ENCODE measurements at regions of chr12 and their contacts with region 1.

Region 1: GRCh38 chr12:3073438-3074250 is 3.5 kb upstream of the TSPAN9 start:
- DNase-seq: peak; percentile 80 to 91 (median 90)
- H3K4me3 ChIP-seq: no peak overlapping the region
- H3K27ac ChIP-seq: no peak overlapping the region
- H3K4me1 ChIP-seq: peaks cover 14% of the 10 kb centered on the region
- H3K27me3 ChIP-seq: no peaks in the 10 kb centered on the region
- CTCF ChIP-seq: peak; percentile 85 to 91 (median 88)
- EP300 ChIP-seq: no peak
- POLR2A ChIP-seq: no peak

Region 2: DNA sequence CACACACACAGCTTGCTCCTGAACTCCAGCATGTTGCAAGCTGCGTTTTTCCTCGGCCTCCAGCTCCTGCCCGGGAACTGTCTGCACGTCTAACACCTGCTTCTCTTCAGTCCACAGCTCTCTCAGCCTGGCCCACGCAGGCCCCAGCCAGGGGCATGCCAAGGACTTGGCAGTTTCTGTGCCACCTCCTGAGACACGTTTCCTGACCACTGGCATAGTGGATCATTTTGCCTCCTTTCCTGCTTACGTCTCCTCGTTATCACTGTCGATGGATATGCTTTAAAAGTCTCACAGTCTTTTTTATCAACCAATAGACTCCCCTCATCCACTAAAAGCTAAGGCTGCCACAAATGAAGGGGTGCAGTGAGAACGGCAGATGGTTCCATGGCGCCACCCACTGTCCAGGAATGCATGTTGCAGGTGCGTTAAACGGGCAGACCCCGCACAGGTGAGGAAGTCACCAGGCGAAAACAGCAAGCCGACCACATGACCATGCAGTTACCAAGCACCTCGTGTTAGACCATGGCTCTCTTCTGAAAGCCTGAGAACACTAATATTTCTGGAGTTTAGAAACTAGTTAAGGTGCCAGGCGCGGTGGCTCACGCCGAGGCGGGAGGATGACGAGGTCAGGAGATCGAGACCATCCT is 129.1 kb before region 1 on chr12:
- intact Hi-C with region 1: no loop called
- DNase-seq: peak; percentile 62 to 79 (median 72)
- H3K4me3 ChIP-seq: no peak overlapping the region
- H3K27ac ChIP-seq: no peak overlapping the region
- H3K4me1 ChIP-seq: no peaks in the 10 kb centered on the region
- H3K27me3 ChIP-seq: no peaks in the 10 kb centered on the region
- CTCF ChIP-seq: peak; percentile 56 to 82 (median 79)
- EP300 ChIP-seq: no peak
- POLR2A ChIP-seq: no peak

Region 3: GRCh38 chr12:3129301-3130056 is 55.8 kb after region 1 on chr12:
- intact Hi-C with region 1: loop called in 2 of 4 experiments (anchors 5 to 10 kb)
- DNase-seq: no peak
- H3K4me3 ChIP-seq: no peak overlapping the region
- H3K27ac ChIP-seq: peak overlapping the region in 1 of 2 donors; percentile 48
- H3K4me1 ChIP-seq: peaks cover 10% of the 10 kb centered on the region
- H3K27me3 ChIP-seq: no peaks in the 10 kb centered on the region
- CTCF ChIP-seq: no peak
- EP300 ChIP-seq: no peak
- POLR2A ChIP-seq: no peak

Region 4: GRCh38 chr12:3135522-3136461 is 62.1 kb after region 1 on chr12:
- intact Hi-C with region 1: loop called (anchors 5 to 10 kb)
- DNase-seq: peak in 3 of 5 donors; percentile 44 to 59 (median 57)
- H3K4me3 ChIP-seq: no peak overlapping the region
- H3K27ac ChIP-seq: no peak overlapping the region
- H3K4me1 ChIP-seq: peaks cover 29% of the 10 kb centered on the region
- H3K27me3 ChIP-seq: no peaks in the 10 kb centered on the region
- CTCF ChIP-seq: peak; percentile 63 to 82 (median 78)
- EP300 ChIP-seq: no peak
- POLR2A ChIP-seq: no peak

Region 5: GRCh38 chr12:3202734-3203446 is 129.2 kb after region 1 on chr12:
- intact Hi-C with region 1: loop called (anchors 2 to 10 kb)
- DNase-seq: peak; percentile 53 to 83 (median 74)
- H3K4me3 ChIP-seq: no peak overlapping the region
- H3K27ac ChIP-seq: no peak overlapping the region
- H3K4me1 ChIP-seq: peaks cover 6% of the 10 kb centered on the region
- H3K27me3 ChIP-seq: no peaks in the 10 kb centered on the region
- CTCF ChIP-seq: peak; percentile 79 to 84 (median 82)
- EP300 ChIP-seq: no peak
- POLR2A ChIP-seq: no peak

Region 6: GRCh38 chr12:3261782-3262359 is 188.2 kb after region 1 on chr12:
- intact Hi-C with region 1: loop called in 1 of 4 experiments (anchors 5 kb)
- DNase-seq: no peak
- H3K4me3 ChIP-seq: no peak overlapping the region
- H3K27ac ChIP-seq: no peak overlapping the region
- H3K4me1 ChIP-seq: peaks cover 6% of the 10 kb centered on the region
- H3K27me3 ChIP-seq: no peaks in the 10 kb centered on the region
- CTCF ChIP-seq: no peak
- EP300 ChIP-seq: no peak
- POLR2A ChIP-seq: no peak

Region 7: GRCh38 chr12:3275171-3276041 is 201.8 kb after region 1 on chr12:
- intact Hi-C with region 1: loop called (anchors 5 to 10 kb)
- DNase-seq: peak; percentile 71 to 88 (median 86)
- H3K4me3 ChIP-seq: no peak overlapping the region
- H3K27ac ChIP-seq: no peak overlapping the region
- H3K4me1 ChIP-seq: peaks cover 6% of the 10 kb centered on the region
- H3K27me3 ChIP-seq: no peaks in the 10 kb centered on the region
- CTCF ChIP-seq: peak; percentile 87 to 96 (median 89)
- EP300 ChIP-seq: no peak
- POLR2A ChIP-seq: no peak

Measured in ovary (tissue), 10 donors.